ENCODE measurements at regions of chr4 and their contacts with region 1.

Region 1: GRCh38 chr4:81040012-81040659 is 9.6 kb downstream of the BMP3 start:
- DNase-seq: peak in 6 of 9 donors; percentile 26 to 54 (median 52)
- ATAC-seq: peak; percentile 47
- H3K4me3 ChIP-seq: no peak overlapping the region
- H3K4me3 Mint-ChIP-seq: no peak overlapping the region
- H3K27ac ChIP-seq: no peak overlapping the region
- H3K27ac Mint-ChIP-seq: no peak overlapping the region
- H3K4me1 ChIP-seq: no peaks in the 10 kb centered on the region
- H3K4me1 Mint-ChIP-seq: no peaks in the 10 kb centered on the region
- H3K27me3 ChIP-seq: no peaks in the 10 kb centered on the region
- H3K27me3 Mint-ChIP-seq: peaks cover 10 to 28% (median 20%) of the 10 kb centered on the region in 5 donors

Region 2: GRCh38 chr4:80221161-80221560 is 819.0 kb before region 1 on chr4:
- CTCF ChIA-PET with region 1: no interaction called
- POLR2A ChIA-PET with region 1: no interaction called
- intact Hi-C with region 1: loop called in 1 of 2 experiments (anchors 2 kb)
- DNase-seq: no peak
- ATAC-seq: no peak
- H3K4me3 ChIP-seq: no peak overlapping the region
- H3K4me3 Mint-ChIP-seq: no peak overlapping the region
- H3K27ac ChIP-seq: no peak overlapping the region
- H3K27ac Mint-ChIP-seq: no peak overlapping the region
- H3K4me1 ChIP-seq: no peaks in the 10 kb centered on the region
- H3K4me1 Mint-ChIP-seq: no peaks in the 10 kb centered on the region
- H3K27me3 ChIP-seq: peaks cover 0 to 4% of the 10 kb centered on the region in 2 donors
- H3K27me3 Mint-ChIP-seq: peaks cover 4 to 52% (median 29%) of the 10 kb centered on the region in 5 donors